SK-N-SH (cell line): ENCODE measurements at regions of chr2 and their contacts with region 1.

Region 1: GRCh38 chr2:120174963-120175581 is 48.1 kb downstream of the TMEM185B start:
- DNase-seq: peak; percentile 74
- H3K4me3 ChIP-seq: no peak overlapping the region
- H3K27ac ChIP-seq: peak overlapping the region in 1 of 2 experiments; percentile 28; a peak in 1 of 4 replicates
- H3K4me1 ChIP-seq: no peaks in the 10 kb centered on the region; a peak in 1 of 4 replicates
- H3K27me3 ChIP-seq: no peaks in the 10 kb centered on the region
- CTCF ChIP-seq: peak; percentile 81
- EP300 ChIP-seq: no peak
- RAD21 ChIP-seq: peak; percentile 88

Region 2: DNA sequence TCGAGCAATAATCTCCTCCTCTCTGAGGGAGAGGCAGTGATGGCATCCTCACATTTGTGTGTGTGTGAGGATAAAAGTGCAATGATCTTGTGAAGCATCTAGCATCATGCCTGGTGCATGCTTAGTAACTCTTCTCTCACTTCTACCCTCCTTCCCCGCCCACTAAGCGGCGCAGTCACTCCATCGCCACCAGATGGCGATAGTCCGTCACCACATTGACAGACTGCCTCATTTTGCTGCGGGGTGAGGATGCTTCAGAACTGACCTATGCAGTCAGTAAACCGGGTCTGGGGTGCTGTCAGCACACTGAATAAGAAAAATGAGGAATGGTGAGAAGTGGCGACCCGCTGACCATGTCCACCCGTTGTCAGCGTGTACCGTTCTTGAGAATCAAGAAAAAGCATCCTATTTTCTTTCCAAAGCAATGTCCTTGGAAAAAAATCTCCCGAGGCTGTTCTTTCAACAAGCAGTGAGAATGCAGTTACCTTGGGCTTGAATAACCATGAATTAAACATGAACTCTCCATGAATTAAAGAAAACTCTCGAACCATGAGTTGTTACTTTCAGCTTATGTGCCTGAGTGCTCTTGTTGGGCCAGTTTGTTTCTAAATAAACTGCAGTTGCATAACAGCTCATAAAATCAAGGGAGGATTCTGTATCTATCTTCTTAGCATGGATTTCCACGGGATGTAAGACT is 533.4 kb before region 1 on chr2:
- CTCF ChIA-PET with region 1: interaction called, 10 read pairs
- POLR2A ChIA-PET with region 1: no interaction called
- DNase-seq: peak; percentile 85
- H3K4me3 ChIP-seq: no peak overlapping the region; a peak in 1 of 4 replicates
- H3K27ac ChIP-seq: no peak overlapping the region
- H3K4me1 ChIP-seq: peaks cover 0 to 14% of the 10 kb centered on the region in 2 experiments; a peak in 2 of 4 replicates
- H3K27me3 ChIP-seq: no peaks in the 10 kb centered on the region
- CTCF ChIP-seq: peak; percentile 95
- EP300 ChIP-seq: no peak
- RAD21 ChIP-seq: peak; percentile 87

Region 3: DNA sequence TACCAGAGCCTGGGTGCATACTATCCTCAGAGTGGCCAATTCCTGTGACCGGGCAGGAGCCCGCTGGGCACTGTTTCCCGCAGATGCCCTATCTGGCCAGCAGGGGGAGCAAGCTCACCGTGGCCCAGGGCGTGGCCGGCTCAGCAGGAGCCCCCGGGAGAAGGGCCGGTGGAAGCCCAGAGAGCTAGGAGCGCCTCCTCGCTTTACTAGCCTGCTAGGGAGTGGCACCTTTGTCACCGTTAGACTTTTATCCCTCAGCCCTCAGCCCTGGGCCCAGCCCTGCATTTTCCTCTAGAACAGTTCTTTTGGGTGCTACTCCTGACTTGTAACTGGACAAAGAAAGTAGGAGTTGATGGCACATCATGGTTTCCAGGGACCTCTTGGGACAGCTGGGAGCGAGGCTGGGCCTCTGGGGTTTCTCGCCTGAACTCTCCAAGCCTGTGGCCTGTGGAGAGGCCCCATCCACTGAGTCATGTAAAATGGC is 472.1 kb before region 1 on chr2:
- CTCF ChIA-PET with region 1: interaction called, 17 read pairs
- POLR2A ChIA-PET with region 1: no interaction called
- DNase-seq: peak; percentile 88
- H3K4me3 ChIP-seq: no peak overlapping the region
- H3K27ac ChIP-seq: no peak overlapping the region
- H3K4me1 ChIP-seq: peaks cover 0 to 10% of the 10 kb centered on the region in 2 experiments; a peak in 1 of 4 replicates
- H3K27me3 ChIP-seq: no peaks in the 10 kb centered on the region
- CTCF ChIP-seq: peak; percentile 94
- EP300 ChIP-seq: no peak
- RAD21 ChIP-seq: peak; percentile 85

Region 4: DNA sequence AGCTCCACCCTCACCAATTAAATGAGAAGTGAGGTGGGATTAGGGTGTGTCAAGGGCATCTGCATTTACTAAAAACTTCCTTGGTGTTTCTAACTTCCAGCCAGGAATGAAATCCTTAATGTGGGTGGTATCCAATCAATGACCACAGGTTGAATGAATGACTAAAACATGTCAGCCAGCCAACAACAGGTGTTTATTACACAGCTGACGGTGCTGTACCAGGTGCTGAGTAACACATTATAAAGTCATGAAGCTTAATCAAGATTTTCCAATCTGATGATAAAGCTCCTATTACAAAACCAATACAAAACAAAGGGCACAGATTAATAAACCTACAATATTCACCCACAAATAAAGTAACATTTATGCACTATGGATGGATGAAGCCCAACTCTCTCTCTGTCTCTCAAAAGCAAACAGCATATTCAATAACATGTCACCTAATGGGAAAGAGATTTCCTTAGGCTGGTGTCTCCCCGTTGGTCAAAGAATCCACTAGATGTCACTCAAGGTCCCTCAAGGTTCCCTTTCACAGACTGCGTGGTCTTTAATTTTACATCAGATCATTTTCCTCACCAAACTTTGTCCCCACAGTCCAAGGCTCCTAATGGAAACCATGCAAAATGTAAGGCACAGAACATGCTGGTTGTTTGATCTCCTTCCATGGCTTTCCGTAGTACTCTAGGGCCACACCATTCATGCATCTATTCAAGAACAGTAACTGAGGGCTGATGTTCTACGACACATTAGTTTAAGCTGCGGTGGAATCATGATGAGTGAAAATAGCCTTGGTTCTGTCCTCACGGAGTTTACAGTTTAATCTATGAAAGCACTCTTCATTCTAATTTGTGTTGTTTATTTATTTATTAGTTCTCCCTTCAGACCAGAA is 421.8 kb before region 1 on chr2:
- CTCF ChIA-PET with region 1: interaction called, 30 read pairs
- POLR2A ChIA-PET with region 1: no interaction called
- DNase-seq: peak; percentile 56
- H3K4me3 ChIP-seq: no peak overlapping the region; a peak in 1 of 4 replicates
- H3K27ac ChIP-seq: no peak overlapping the region
- H3K4me1 ChIP-seq: peaks cover 0 to 22% of the 10 kb centered on the region in 2 experiments; a peak in 3 of 4 replicates
- H3K27me3 ChIP-seq: no peaks in the 10 kb centered on the region
- CTCF ChIP-seq: peak; percentile 73
- EP300 ChIP-seq: no peak
- RAD21 ChIP-seq: peak; percentile 87

Region 5: GRCh38 chr2:120134263-120134662 is 40.8 kb before region 1 on chr2:
- CTCF ChIA-PET with region 1: interaction called, 29 read pairs
- POLR2A ChIA-PET with region 1: no interaction called
- DNase-seq: no peak
- H3K4me3 ChIP-seq: peak overlapping the region in 1 of 2 experiments; percentile 9; a peak in 1 of 4 replicates
- H3K27ac ChIP-seq: no peak overlapping the region; a peak in 1 of 4 replicates
- H3K4me1 ChIP-seq: peaks cover 3 to 24% of the 10 kb centered on the region in 2 experiments; a peak in 2 of 4 replicates
- H3K27me3 ChIP-seq: no peaks in the 10 kb centered on the region
- CTCF ChIP-seq: no peak
- EP300 ChIP-seq: no peak
- RAD21 ChIP-seq: no peak

Region 6: GRCh38 chr2:120155308-120155707 is 19.8 kb before region 1 on chr2:
- CTCF ChIA-PET with region 1: no interaction called
- POLR2A ChIA-PET with region 1: no interaction called
- DNase-seq: no peak
- H3K4me3 ChIP-seq: no peak overlapping the region
- H3K27ac ChIP-seq: no peak overlapping the region
- H3K4me1 ChIP-seq: no peaks in the 10 kb centered on the region
- H3K27me3 ChIP-seq: no peaks in the 10 kb centered on the region
- CTCF ChIP-seq: no peak
- EP300 ChIP-seq: no peak
- RAD21 ChIP-seq: no peak

Region 7: GRCh38 chr2:120228531-120228930 is 53.5 kb after region 1 on chr2:
- CTCF ChIA-PET with region 1: no interaction called
- POLR2A ChIA-PET with region 1: no interaction called
- DNase-seq: no peak
- H3K4me3 ChIP-seq: no peak overlapping the region
- H3K27ac ChIP-seq: no peak overlapping the region
- H3K4me1 ChIP-seq: peaks cover 3 to 22% of the 10 kb centered on the region in 2 experiments; a peak in 2 of 4 replicates
- H3K27me3 ChIP-seq: no peaks in the 10 kb centered on the region
- CTCF ChIP-seq: no peak; the same call in 1 of the 2 replicates
- EP300 ChIP-seq: no peak
- RAD21 ChIP-seq: peak; percentile 33

Region 8: DNA sequence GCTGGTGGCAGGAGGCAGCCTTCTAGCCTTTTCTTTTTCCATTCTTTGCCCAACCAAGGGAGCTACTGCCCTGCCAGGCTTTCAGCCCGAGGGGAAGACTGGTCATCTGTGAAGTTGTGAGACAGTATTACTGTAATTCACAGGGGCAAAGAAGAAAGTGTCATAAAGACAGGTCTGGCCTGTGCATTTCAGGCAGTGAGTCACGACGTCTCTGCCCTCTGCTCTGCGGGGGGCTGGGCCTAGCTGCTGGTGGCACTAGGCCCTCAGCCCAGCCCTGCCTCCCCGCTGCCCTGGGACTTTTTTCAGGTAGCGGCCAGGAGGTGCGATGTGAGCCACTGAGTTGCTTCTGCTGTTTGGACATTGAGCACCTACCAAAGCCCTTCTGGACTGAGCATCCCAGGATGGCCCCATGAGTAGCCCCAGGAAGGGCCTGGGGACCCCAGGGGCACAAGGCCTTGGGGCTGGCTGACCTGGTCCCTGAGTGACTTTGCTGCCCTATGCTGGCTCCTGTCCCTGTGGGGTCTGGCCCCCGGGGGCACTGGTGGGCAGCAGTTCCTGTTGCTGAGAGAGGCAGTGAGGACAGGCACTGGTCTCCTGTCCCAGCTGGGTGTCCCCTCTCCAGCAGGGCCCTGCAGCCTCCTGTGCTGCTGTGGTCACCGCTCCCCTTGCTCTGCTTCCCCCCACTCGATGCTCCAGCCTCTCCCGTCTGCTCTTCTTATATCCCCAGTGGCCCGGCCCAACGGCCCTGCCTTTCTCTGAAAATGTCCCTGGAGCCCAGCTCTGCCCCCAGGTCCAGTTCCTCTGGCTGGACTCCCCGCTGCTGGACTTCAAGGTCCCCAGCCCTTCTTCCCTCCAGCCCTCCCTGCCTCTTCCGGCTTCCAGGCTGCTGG is 177.9 kb after region 1 on chr2:
- CTCF ChIA-PET with region 1: no interaction called
- POLR2A ChIA-PET with region 1: no interaction called
- DNase-seq: no peak
- H3K4me3 ChIP-seq: no peak overlapping the region
- H3K27ac ChIP-seq: no peak overlapping the region
- H3K4me1 ChIP-seq: no peaks in the 10 kb centered on the region; a peak in 1 of 4 replicates
- H3K27me3 ChIP-seq: 0 out of 2 replicates have a peak, but pooled peaks cover 12% of the 10 kb centered on the region
- CTCF ChIP-seq: no peak
- EP300 ChIP-seq: no peak
- RAD21 ChIP-seq: no peak